Activated CD4-positive, alpha-beta T cell treated with anti-CD3 and anti-CD28 coated beads, Interleukin-2, amount 10 ng/mL, durations not matched to agents 24 days and 14 days (primary cell): ENCODE measurements at regions of chr11 and their contacts with region 1.

Region 1: GRCh38 chr11:33736148-33736809 is at the start of gene CD59:
- DNase-seq: peak; percentile 97
- H3K4me3 Mint-ChIP-seq: peak within 1 kb of the TSS; percentile 90
- H3K27ac Mint-ChIP-seq: peak within 1 kb of the TSS; percentile 89
- H3K4me1 Mint-ChIP-seq: peaks cover 36% of the 10 kb centered on the region
- H3K27me3 Mint-ChIP-seq: peaks cover 8% of the 10 kb centered on the region
- total RNA-seq, gene CD59: 94.1 and 98.7 TPM in 2 replicates

Region 2: DNA sequence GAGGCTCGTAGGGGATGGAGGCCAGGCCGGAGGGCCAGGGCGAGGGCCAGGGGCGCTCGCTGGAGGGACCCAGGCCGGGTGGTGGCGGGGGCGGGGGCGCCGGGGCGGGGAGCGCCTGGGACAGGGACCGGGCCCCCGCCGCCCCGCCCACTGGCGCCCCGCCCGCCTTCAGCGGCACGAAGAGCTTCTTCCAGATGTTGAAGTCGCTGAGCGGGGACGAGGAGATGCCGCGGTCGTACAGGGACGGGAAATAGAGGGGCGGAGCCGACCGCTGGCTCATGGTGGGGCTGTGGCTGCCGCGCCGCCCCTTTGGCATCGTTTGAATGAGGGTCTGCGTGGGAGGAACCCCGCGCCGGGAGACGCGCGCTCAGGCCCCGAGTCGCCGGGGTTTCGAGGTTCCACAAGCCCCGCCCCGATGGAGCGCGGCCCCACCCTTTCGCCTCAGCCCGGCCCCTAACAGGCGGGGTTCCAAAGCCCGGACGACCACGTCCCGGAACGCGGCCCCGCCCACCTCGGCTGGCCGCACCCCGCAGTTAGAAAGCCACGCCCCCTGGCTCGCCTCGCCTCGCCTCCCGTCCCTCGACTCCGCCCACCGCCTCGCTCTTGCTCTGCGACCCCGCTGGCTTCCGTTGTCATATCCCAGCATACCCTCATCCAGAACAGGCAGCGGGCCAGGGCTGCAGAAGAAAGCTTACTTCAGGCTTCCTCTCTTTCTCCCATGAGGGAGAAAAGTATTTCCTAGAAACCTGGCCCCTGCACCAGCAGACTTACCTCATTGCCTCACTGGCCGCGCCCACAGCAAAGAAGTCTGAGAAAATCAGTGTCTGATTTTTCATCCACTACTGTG is 35.6 kb before region 1 on chr11 and contains the start of gene C11orf91:
- intact Hi-C with region 1: loop called (anchors 1 kb)
- DNase-seq: peak; percentile 99
- H3K4me3 Mint-ChIP-seq: peak within 1 kb of the TSS; percentile 92
- H3K27ac Mint-ChIP-seq: peak within 1 kb of the TSS; percentile 68
- H3K4me1 Mint-ChIP-seq: peaks cover 20% of the 10 kb centered on the region
- H3K27me3 Mint-ChIP-seq: peaks cover 25% of the 10 kb centered on the region
- total RNA-seq, gene C11orf91: 0.51 TPM in 1 of 2 replicates, not detected in the other

Region 3: DNA sequence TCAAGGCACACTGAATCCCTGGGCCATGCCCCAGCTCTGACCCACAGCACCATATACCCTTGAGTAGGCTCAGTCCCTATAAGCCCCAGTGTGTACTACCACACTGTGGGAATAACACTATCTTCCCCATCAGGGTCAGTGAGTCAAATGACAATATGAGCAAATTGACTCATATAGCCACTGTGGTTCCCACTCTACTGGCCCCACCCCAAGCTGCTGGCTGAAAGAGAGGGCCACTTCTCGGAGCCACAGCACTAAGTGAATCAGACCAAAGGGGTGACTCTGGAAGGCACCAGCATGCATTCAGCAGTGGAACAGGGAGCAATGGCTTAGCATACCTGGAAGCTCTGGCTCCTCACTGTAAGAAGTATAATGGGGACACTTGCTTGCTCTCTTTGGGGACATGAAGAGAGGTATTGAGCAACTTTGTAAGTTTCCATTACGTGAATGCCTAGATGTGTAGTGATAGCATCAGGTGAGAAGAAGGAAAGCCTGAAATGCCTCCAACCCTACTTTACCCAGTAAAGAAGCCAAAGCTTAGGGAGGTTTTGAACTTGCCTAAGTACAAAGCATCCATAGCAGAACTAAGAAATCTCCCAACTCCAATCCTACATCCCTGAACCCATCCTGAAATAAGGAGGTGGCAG is 13.6 kb before region 1 on chr11:
- intact Hi-C with region 1: loop called (anchors 1 kb)
- DNase-seq: peak; percentile 76
- H3K4me3 Mint-ChIP-seq: peak overlapping the region; percentile 62
- H3K27ac Mint-ChIP-seq: peak overlapping the region; percentile 88
- H3K4me1 Mint-ChIP-seq: peaks cover 60% of the 10 kb centered on the region
- H3K27me3 Mint-ChIP-seq: peaks cover 2% of the 10 kb centered on the region

Region 4: DNA sequence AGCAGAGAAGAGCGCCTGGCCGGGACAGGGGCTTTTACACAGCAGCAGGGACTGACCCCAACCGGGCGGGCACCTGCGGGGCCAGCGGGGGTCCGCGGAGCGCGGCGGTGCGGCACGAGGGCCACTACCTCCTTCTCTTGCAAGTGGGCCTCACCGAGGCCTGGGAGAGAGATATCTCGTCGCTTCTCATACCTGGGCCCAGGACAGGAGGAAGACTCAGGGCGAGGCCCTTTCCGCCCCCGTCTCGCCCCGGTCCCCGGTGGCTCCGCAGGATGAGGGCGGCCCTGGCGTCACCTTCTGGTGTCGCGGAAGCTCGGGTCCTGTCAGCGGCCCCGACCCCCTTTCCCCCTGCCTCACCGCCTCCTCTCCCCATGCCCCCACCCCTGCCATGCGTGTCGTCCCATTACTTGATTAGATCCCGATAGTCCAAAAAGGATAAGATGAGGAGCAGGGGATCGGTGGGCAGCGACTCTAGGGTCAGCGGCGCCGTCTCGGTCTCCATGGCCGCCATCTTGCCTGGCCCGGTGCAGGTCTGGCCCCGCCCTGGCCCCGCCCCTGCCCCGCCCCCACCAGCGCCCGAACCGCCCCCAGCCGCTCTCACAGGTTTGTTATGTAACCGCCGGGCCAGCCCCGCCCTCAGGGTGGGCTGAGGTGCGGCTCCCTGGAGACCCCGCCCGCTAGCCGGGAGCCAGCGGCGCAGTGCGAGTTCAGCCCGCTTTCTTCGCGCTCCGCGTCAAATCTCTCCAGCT is 37.9 kb after region 1 on chr11 and contains the start of gene FBXO3:
- intact Hi-C with region 1: loop called (anchors 1 kb)
- DNase-seq: peak; percentile 96
- H3K4me3 Mint-ChIP-seq: peak within 1 kb of the TSS; percentile 97
- H3K27ac Mint-ChIP-seq: peak within 1 kb of the TSS; percentile 94
- H3K4me1 Mint-ChIP-seq: peaks cover 23% of the 10 kb centered on the region
- H3K27me3 Mint-ChIP-seq: peaks cover 26% of the 10 kb centered on the region
- total RNA-seq, gene FBXO3: 18.1 and 20.9 TPM in 2 replicates

Region 5: DNA sequence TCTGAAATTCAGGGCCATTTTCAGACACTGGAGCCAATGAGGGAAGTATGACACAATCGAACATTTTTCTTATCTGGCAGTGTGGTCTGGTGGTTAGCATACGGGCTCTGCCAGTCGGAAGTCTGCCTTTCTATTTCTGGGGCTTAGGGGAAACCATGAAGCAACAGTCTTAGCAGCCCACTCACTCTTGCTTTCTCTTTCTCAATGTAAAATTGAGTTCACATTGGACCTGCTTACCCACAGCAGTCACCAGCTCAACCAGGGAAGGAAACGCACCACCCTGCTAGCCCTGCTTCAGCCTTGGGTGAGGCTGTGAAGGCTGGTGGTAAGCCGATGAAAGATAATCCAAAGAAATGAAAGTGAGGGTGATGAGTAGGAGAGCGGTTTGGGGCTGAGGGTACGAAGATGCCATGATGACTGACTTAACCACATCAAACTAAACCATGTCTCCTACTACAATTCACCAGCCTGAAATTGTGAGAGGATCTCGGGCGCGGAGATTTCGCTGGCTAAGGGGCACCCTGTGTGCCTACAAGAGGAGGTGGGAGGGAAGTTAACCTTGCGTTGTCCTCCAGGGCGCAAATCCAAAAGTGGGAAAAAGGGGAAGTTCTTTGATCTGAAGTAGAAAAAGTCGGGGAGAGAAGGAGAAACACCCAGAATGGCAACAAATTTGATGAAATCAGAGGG is 157.6 kb after region 1 on chr11:
- intact Hi-C with region 1: loop called (anchors 5 kb)
- DNase-seq: peak; percentile 83
- H3K4me3 Mint-ChIP-seq: peak overlapping the region; percentile 66
- H3K27ac Mint-ChIP-seq: peak overlapping the region; percentile 50
- H3K4me1 Mint-ChIP-seq: peaks cover 15% of the 10 kb centered on the region
- H3K27me3 Mint-ChIP-seq: peaks cover 68% of the 10 kb centered on the region

Region 6: GRCh38 chr11:35337136-35337918 is 1601.0 kb after region 1 on chr11:
- intact Hi-C with region 1: loop called (anchors 10 kb)
- DNase-seq: no peak
- H3K4me3 Mint-ChIP-seq: no peak overlapping the region
- H3K27ac Mint-ChIP-seq: peak overlapping the region; percentile 45
- H3K4me1 Mint-ChIP-seq: peaks cover 32% of the 10 kb centered on the region
- H3K27me3 Mint-ChIP-seq: peaks cover 3% of the 10 kb centered on the region